ENCODE measurements at regions of chr6 and their contacts with region 1.

Region 1: DNA sequence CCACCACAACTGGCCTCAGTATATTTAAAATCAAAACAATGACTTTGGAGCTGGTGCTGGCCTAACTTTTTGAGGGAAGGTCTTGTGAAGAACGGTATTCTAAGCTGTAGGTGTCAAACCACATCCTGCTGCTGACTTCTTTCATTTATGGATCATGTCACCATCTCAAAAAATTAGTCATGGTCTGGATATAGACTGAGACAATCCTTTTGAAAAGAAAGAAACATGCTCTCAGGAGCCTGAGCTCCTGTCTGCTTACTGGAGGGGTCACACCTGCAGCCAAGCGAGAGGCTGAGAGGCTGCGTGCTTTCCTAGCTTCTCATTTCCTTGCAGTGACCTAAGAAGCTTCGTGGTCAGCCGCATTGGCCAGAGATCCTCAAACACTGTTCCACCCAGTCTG is 55.2 kb downstream of the TIAM2 start:
- DNase-seq: peak; percentile 44
- H3K4me3 Mint-ChIP-seq: peak overlapping the region; percentile 76
- H3K27ac Mint-ChIP-seq: peak overlapping the region; percentile 95
- H3K4me1 Mint-ChIP-seq: peaks cover 43% of the 10 kb centered on the region
- H3K27me3 Mint-ChIP-seq: no peaks in the 10 kb centered on the region

Region 2: GRCh38 chr6:154606457-154606856 is 443.9 kb before region 1 on chr6:
- intact Hi-C with region 1: loop called (anchors 1 kb)
- DNase-seq: peak; percentile 66
- H3K4me3 Mint-ChIP-seq: peak overlapping the region; percentile 65
- H3K27ac Mint-ChIP-seq: peak overlapping the region; percentile 86
- H3K4me1 Mint-ChIP-seq: peaks cover 24% of the 10 kb centered on the region
- H3K27me3 Mint-ChIP-seq: peaks cover 3% of the 10 kb centered on the region

Region 3: GRCh38 chr6:154995284-154996015 is 54.9 kb before region 1 on chr6 and contains the start of gene TIAM2:
- intact Hi-C with region 1: loop called (anchors 1 kb)
- DNase-seq: peak; percentile 11
- H3K4me3 Mint-ChIP-seq: peak within 1 kb of the TSS; percentile 71
- H3K27ac Mint-ChIP-seq: peak within 1 kb of the TSS; percentile 44
- H3K4me1 Mint-ChIP-seq: peaks cover 18% of the 10 kb centered on the region
- H3K27me3 Mint-ChIP-seq: peaks cover 16% of the 10 kb centered on the region
- total RNA-seq, gene TIAM2: 90.4 and 95.6 TPM in 2 replicates

Region 4: DNA sequence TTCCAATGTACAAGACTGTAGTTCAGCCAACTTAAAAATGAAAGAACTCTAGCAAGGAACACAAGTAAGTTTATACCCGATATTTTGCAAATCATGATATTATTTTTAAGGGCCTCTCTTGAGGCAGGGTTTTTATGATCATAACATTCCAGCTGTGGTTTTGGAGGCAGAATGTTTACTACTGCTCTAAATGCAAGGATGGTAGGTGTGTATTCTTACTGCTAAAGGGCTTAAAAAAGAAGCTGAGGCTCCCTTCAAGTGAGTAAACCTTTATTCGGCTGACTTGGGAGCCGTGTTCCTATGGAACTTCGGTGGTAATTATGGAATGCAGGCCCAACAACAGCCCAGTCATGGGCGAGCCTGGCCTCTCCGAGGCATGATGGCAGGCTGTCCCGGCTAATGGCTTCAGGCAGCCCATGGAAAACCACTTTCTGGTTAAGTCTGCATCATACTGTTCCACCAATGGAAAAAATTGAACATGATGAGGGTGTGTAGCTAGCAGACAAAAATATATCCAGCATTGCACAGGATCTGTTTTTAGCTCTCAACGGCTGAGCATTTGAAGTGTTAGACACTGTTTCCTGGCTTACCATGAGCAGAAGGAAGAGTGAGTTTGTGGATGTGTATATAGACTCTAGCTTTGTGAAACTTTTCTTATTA is 56.3 kb after region 1 on chr6:
- intact Hi-C with region 1: loop called (anchors 2 kb)
- DNase-seq: no peak
- H3K4me3 Mint-ChIP-seq: peak overlapping the region; percentile 91
- H3K27ac Mint-ChIP-seq: peak overlapping the region; percentile 87
- H3K4me1 Mint-ChIP-seq: peaks cover 79% of the 10 kb centered on the region
- H3K27me3 Mint-ChIP-seq: no peaks in the 10 kb centered on the region

Region 5: DNA sequence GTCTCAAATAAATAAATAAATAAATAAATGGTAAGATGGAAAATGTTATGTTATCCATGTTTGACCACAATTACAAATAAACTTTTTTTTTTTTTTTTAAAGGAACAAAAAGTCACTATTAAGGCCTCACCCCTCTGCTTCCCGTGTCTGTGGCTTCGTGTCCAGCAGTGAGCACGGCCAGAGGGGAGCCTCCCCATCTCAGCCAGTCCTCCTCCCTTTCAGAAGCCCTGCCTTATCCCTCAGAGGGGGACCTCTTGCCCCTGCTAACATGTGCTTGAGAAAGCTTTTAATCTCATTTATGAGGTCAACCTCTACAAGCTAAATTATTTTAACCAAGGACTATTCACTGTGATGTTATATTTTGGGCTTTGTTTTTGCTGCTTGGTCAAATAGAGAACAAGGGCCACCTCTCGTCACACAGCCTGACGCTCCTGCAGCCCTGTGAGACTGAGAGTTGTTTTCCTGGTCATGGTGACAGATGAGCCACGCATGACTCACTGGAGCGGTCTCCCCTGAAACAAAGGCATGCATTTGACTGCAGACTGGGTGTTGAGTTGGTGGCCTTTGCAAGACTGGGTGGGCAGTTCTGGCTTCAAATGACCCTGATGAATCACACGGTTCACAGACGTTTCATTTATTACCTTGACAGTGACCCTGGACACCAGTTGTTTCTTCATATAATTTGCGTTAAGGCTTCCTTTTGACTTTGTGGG is 76.6 kb after region 1 on chr6:
- intact Hi-C with region 1: loop called (anchors 1 kb)
- DNase-seq: no peak
- H3K4me3 Mint-ChIP-seq: peak overlapping the region; percentile 60
- H3K27ac Mint-ChIP-seq: peak overlapping the region; percentile 92
- H3K4me1 Mint-ChIP-seq: peaks cover 51% of the 10 kb centered on the region
- H3K27me3 Mint-ChIP-seq: no peaks in the 10 kb centered on the region

Region 6: DNA sequence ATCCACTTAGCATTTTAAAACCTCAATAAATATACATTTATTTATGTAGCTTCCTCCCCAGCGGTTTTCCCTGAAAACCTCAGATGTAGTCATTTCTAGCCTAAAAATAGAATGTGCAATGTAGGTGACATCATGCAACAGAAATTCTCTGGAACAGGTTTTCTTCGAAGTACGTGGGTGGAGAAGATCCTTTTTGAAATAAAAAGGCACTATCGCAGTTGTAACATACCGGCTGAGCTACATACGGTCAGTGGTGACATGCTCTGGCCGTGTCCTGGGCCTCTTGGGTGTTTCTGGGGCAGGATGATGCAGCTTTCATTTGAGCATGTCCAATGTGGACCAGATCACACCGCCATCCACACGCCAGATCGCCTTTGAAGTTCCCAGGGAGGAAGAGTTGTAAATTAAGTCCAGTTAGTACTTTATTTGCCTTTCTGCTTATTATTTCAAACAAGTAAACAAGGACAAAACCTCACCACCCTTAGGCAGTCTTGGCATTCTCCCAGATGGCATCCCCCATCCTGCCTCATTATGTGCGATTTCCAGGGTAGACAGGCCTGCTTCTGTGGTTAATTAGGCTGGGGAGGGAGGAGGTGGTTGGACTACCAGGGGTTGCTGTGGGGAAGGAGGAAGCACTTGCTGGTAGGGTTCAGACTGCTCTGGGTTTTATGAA is 104.0 kb after region 1 on chr6:
- intact Hi-C with region 1: loop called (anchors 1 kb)
- DNase-seq: peak; percentile 48
- H3K4me3 Mint-ChIP-seq: peak overlapping the region; percentile 78
- H3K27ac Mint-ChIP-seq: peak overlapping the region; percentile 97
- H3K4me1 Mint-ChIP-seq: peaks cover 90% of the 10 kb centered on the region
- H3K27me3 Mint-ChIP-seq: peaks cover 2% of the 10 kb centered on the region

Measured in activated T-helper 1 cell treated with anti-CD3 and anti-CD28 coated beads, Interleukin-12 subunit alpha, Interleukin-12 subunit beta, Interleukin-2, Interleukin-4 antibody, amounts not matched to agents 30 ng/mL and 10 ng/mL and 1 ng/mL, durations not matched to agents 14 hours and 24 hours and 36 hours (primary cell).